Activated naive CD4-positive, alpha-beta T cell treated with anti-CD3 and anti-CD28 coated beads for 36 hours (primary cell): ENCODE measurements at regions of chr7 and their contacts with region 1.

Region 1: DNA sequence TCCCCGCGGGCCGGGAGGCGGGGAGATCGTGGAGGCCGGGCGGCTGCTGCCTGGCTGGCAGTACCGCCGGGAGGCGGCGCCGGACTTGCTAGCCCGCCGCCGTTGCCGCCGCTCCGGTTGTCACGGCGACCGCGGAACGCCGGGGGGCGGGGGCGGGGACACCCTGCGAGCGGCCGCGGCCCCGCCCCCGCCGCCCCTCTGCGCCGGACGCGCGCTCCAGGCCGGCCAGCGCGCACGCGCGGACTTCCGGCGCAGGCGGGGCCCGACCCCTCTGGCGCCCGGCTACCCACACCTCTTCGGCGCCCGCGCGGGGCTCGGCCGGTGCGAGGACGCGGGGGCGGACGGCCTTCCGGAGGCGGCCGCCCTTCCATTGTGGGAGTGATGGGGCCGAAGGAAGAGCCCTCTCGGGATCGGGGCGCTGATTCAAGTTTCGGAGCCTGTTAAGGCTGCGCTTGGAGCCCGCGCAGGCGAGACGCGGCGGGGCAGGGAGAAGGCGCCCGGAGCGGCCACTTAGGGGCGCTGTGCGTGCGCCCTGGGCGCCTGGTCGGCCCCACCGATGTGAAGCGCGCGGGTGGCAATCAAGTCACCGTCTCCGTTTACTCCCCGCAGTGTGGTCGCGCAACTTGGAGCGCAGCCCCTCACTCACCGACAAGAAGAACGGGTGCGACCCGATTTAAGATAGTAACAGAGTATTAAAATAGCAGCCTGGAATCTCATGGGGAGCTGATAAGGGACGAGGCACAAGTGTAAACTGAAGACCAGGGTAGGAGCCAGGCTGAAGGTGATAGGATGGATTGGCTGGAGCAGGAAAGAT is 448 bp upstream of the DPY19L1 start:
- DNase-seq: peak; percentile 82
- H3K4me3 Mint-ChIP-seq: peak overlapping the region; percentile 80
- H3K27ac Mint-ChIP-seq: peak overlapping the region; percentile 60
- H3K4me1 Mint-ChIP-seq: peaks cover 22% of the 10 kb centered on the region
- H3K27me3 Mint-ChIP-seq: no peaks in the 10 kb centered on the region

Region 2: DNA sequence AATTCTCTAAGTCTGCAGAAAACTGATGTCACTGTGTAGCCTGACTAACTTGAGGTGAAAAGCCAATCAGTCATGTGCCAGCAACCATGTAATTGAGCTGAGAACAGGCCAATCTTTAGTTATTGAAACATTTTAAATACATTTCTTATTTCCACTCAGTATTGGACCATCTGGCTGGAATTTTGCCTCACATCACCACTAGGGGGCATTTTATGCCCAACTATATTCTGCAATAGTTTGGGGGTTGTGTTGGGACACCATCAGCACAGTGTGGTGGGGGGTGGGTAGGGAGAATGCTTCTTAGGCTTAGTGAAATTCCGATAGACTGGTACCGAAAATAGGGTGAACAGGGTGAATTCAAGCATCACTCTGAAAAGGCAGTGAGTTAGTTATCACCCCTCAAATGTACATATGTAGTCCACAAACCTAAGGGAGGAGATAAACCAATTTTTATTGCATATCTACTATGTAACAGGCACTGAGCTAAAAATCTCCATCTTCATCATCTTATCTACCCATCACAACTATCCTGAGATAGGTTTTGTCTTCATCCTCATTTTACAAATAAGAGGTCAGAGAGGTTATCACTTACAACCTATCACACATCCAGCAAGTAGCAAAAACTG is 361.9 kb before region 1 on chr7:
- CTCF ChIA-PET with region 1: no interaction called
- intact Hi-C with region 1: loop called (anchors 1 kb)
- DNase-seq: peak; percentile 37
- H3K4me3 Mint-ChIP-seq: no peak overlapping the region
- H3K27ac Mint-ChIP-seq: no peak overlapping the region
- H3K4me1 Mint-ChIP-seq: no peaks in the 10 kb centered on the region
- H3K27me3 Mint-ChIP-seq: peaks cover 4% of the 10 kb centered on the region

Region 3: GRCh38 chr7:34900891-34901513 is 136.7 kb before region 1 on chr7:
- CTCF ChIA-PET with region 1: no interaction called
- intact Hi-C with region 1: loop called (anchors 1 kb)
- DNase-seq: peak; percentile 5
- H3K4me3 Mint-ChIP-seq: no peak overlapping the region
- H3K27ac Mint-ChIP-seq: no peak overlapping the region
- H3K4me1 Mint-ChIP-seq: peaks cover 1% of the 10 kb centered on the region
- H3K27me3 Mint-ChIP-seq: peaks cover 12% of the 10 kb centered on the region

Region 4: GRCh38 chr7:35537067-35538023 is 499.6 kb after region 1 on chr7:
- CTCF ChIA-PET with region 1: no interaction called
- intact Hi-C with region 1: loop called (anchors 1 kb)
- DNase-seq: peak; percentile 79
- H3K4me3 Mint-ChIP-seq: peak overlapping the region; percentile 67
- H3K27ac Mint-ChIP-seq: no peak overlapping the region
- H3K4me1 Mint-ChIP-seq: peaks cover 1% of the 10 kb centered on the region
- H3K27me3 Mint-ChIP-seq: peaks cover 9% of the 10 kb centered on the region

Region 5: GRCh38 chr7:35723011-35723410 is 685.3 kb after region 1 on chr7:
- CTCF ChIA-PET with region 1: no interaction called
- intact Hi-C with region 1: loop called (anchors 1 kb)
- DNase-seq: peak; percentile 22
- H3K4me3 Mint-ChIP-seq: no peak overlapping the region
- H3K27ac Mint-ChIP-seq: peak overlapping the region; percentile 59
- H3K4me1 Mint-ChIP-seq: peaks cover 43% of the 10 kb centered on the region
- H3K27me3 Mint-ChIP-seq: no peaks in the 10 kb centered on the region